ENCODE measurements at regions of chr7 and their contacts with region 1.

Region 1: DNA sequence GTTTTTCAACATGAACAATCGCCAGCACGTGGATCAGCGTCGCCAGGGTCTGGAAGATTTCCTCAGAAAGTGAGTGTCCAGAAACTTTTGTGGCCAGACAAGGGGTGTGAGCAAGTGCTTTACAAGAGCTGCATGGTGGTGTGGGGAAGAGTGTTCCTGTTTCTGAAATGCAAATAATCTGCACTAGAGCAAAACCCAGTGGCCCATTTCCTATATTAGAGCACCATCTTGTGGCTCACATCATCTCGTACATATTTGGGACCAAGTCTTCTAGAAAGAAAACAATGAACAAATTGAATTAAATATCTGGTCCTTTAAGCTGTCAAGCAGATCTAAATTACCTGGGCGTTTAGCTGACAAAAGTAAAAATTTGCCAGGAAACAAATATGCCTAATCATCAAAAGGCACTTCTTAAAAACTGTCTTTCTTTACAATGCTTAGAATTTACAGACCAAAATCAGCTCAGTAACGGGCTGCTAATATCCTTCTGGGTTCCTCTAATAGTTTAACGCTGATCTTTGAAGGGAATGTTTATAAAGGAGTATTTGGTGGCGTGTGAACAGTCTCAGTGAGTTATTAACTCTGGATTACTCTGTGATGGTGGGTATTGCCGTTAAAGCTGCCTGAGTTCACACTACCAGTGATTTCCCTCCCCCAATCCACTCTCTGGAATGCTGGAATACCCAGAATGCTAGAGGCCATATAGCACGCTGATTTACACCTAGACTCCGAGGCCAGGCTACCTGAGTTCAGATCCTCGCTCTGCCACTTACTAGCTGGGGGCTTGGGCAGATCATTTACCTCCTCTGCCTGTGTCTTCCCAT is 73.6 kb downstream of the SNX10 start:
- DNase-seq: peak; percentile 54
- CTCF ChIP-seq: peak; percentile 74

Region 2: DNA sequence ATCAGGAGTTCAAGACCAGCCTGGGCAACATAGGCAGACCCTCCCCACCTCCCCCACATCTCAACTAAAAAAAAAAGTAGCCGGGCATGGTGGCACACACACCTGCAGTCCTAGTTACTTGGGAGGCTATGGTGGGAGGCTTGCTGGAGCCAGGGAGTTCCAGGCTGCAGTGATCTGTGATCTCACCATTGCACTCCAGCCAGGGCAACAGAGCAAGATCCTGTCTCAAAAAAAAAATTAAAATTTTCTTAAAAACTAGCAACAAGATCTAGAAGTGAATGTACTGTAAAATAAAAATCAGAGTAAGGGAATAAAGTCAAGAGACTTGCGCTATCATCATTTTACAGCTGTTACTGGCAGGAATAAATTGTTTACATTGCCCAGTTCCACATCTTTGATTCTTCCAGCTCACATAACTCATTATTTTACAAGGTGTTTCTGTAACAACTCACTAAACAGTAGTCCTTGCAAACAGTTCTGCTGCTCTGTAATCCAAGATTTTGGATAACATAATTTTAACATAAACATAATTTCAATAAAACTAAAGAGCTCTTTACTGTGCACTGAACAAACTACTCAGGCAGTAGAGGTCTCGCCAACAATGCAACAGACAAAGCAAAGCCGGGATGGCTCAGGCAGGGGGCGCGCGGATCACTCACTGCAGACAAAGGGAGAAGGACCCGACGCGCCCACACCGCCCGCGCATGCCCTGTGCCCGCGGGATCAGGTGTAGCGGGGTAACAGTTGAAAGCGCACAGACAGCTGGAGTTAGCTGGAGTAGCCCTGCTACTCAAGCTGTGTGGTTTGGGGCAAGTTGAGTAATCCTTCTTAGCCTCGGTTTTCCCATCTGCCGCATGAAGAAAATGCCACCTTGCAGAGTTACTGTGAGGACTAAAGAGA is 286.6 kb before region 1 on chr7:
- CTCF ChIA-PET with region 1: interaction called, 25 read pairs
- POLR2A ChIA-PET with region 1: no interaction called
- DNase-seq: peak; percentile 75
- CTCF ChIP-seq: peak; percentile 54

Region 3: DNA sequence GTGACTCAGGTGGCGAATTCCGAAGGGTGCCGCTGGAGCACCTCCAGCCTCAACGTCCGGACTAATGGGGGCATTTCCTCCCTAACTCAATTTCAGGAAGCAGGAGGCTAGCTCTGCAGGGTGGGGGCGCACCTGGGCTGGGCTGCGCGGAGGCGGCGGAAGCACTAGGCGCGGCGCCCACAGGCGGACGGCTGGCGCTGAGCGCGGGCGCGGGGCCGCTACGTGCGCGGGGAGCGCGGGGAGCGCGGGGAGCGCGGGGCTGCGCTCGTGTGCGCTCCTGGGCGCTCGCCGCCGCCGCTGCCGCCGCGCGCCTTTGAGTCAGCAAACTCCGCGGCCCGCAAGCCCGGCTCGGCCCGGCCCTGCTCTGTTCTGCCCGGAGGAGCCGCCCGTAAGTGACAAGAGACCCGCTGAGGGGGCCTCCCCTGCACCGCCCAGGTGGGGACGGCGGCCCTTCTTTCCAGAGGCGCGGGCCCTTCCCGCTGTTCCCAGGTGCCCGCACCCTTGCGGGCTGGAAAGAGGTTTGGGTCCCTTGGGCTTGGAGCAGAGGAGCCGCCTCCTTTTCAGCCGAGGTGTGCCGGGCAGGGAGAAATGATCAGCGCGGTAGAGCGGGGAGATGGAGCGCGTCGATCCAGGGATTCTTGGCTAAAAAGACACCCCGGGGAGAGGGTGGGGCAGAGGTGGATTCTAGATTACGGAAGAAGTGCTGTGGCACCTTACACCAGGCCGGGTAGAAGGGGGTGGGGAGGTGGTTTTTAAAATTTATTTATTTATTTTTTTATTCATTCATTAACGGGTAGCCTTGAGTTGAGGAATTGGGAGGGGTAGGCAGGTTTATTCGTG is 73.4 kb before region 1 on chr7 and contains the start of gene SNX10:
- CTCF ChIA-PET with region 1: interaction called, 14 read pairs
- POLR2A ChIA-PET with region 1: no interaction called
- DNase-seq: peak; percentile 76
- CTCF ChIP-seq: peak; percentile 85

Region 4: DNA sequence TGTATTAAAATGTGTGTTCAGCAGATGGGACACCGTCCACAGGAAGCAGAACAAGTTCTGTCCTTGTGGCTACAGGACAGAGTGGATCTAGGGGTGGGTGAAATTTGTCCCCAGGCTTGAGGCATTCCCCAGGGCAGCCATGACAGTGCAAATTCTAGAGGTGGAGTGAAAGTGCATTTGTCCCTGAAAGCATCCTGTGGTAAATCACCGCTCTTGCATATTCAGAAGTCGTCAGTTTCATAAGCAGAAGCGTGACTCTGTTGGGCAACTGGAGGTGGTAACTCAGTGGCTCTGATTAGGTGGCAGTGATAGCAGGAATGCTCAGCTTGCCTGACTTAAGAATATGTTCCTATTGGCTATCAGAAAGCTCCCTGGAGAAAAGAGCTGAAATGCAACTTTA is 23.0 kb after region 1 on chr7:
- CTCF ChIA-PET with region 1: interaction called, 17 read pairs
- POLR2A ChIA-PET with region 1: no interaction called
- DNase-seq: peak; percentile 32
- CTCF ChIP-seq: no peak

Region 5: DNA sequence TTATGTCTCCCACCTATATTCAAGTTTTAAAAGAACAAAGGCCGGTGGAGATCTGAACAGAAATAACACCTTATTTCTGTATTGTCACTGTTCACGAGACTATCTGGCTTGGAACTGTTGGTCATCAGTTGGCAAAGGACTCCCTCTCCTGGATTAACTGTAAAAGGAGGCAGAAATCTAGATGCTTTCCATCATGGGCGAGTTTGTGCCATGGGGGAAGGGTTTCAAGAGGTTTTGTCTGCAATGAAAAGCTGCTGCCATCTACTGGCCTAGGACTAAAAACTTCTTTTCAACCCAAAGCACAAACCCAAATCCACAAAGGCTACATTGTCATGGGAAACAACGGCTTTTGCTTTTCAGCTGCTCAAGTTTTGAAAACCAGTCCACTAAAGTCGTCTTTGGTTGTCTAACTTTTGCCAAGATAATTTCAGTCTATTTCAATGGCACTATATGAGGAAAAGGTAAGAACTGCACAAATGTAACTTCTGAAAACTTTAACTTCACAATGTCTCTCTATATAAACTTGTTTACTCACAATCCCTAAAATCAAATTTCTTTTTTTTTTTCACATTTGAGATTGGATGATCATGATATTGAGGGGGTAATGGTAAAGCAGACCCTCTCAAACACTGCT is 302.3 kb after region 1 on chr7:
- CTCF ChIA-PET with region 1: interaction called, 50 read pairs
- POLR2A ChIA-PET with region 1: no interaction called
- DNase-seq: peak; percentile 37
- CTCF ChIP-seq: peak; percentile 69